ENCODE measurements at regions of chr11 and their contacts with region 1.

Region 1: GRCh38 chr11:68447015-68447801 is 13.3 kb upstream of the PPP6R3 start:
- DNase-seq: peak; percentile 59 to 74
- H3K4me3 ChIP-seq: no peak overlapping the region
- H3K27ac ChIP-seq: peak overlapping the region in 1 of 2 donors; percentile 12
- H3K4me1 ChIP-seq: no peaks in the 10 kb centered on the region
- H3K27me3 ChIP-seq: no peaks in the 10 kb centered on the region
- CTCF ChIP-seq: peak; percentile 89 to 92 (median 91)
- POLR2A ChIP-seq: no peak

Region 2: GRCh38 chr11:68257475-68258362 is 189.5 kb before region 1 on chr11:
- intact Hi-C with region 1: loop called (anchors 1 kb)
- DNase-seq: peak; percentile 92 to 97
- H3K4me3 ChIP-seq: peak overlapping the region in 2 of 3 donors; percentile 28 to 47
- H3K27ac ChIP-seq: no peak overlapping the region
- H3K4me1 ChIP-seq: no peaks in the 10 kb centered on the region
- H3K27me3 ChIP-seq: no peaks in the 10 kb centered on the region
- CTCF ChIP-seq: peak; percentile 88 to 94 (median 94)
- POLR2A ChIP-seq: no peak

Region 3: GRCh38 chr11:68398995-68399851 is 48.0 kb before region 1 on chr11:
- intact Hi-C with region 1: no loop called
- DNase-seq: peak in 1 of 2 donors; percentile 48
- H3K4me3 ChIP-seq: no peak overlapping the region
- H3K27ac ChIP-seq: peak overlapping the region; percentile 57 to 82
- H3K4me1 ChIP-seq: peaks cover 7% of the 10 kb centered on the region in 2 donors
- H3K27me3 ChIP-seq: no peaks in the 10 kb centered on the region
- CTCF ChIP-seq: no peak
- POLR2A ChIP-seq: no peak

Measured in breast epithelium (tissue), 4 donors.